ENCODE measurements at regions of chr2 and their contacts with region 1.

Region 1: DNA sequence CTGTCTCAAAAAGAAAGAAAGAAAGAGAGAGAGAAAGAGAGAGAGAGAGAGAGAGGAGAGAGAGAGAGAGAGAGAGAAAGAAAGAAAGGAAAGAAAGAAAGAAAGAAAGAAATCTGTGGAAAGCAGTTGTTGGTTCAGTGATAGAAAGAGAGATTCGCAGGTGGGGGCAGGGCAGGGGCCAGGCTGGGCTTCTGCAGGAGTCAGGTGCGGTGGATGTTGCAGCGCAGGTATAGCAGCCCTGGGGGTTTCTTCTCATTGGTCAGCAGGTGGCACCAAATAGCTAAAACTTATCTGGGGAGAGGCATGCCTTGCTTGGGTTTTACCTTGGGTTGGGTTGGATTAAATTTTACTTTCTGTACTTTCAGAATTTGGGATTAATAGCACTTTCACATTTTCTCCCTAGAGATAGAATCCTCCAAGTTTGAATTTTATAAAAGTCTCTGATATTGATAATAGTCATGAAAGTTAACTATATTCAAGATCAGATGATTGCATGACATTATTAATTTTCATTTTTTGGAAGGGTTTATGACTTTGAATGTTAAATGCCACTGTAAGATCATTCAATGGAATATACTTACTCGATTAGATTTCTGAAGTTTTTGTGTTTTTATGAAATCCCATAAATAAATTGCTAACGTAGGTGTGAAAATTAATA is 66.6 kb downstream of the SPTBN1 start:
- DNase-seq: peak; percentile 83
- H3K4me3 ChIP-seq: no peak overlapping the region
- H3K27ac ChIP-seq: no peak overlapping the region
- H3K4me1 ChIP-seq: no peaks in the 10 kb centered on the region
- H3K27me3 ChIP-seq: no peaks in the 10 kb centered on the region
- CTCF ChIP-seq: peak; percentile 62

Region 2: GRCh38 chr2:54387059-54387991 is 135.4 kb before region 1 on chr2:
- intact Hi-C with region 1: no loop called
- DNase-seq: no peak
- H3K4me3 ChIP-seq: no peak overlapping the region
- H3K27ac ChIP-seq: no peak overlapping the region
- H3K4me1 ChIP-seq: no peaks in the 10 kb centered on the region
- H3K27me3 ChIP-seq: no peaks in the 10 kb centered on the region
- CTCF ChIP-seq: no peak

Region 3: GRCh38 chr2:54629914-54630857 is 107.4 kb after region 1 on chr2:
- intact Hi-C with region 1: loop called (anchors 10 kb)
- DNase-seq: peak; percentile 34
- H3K4me3 ChIP-seq: no peak overlapping the region
- H3K27ac ChIP-seq: no peak overlapping the region
- H3K4me1 ChIP-seq: no peaks in the 10 kb centered on the region
- H3K27me3 ChIP-seq: no peaks in the 10 kb centered on the region
- CTCF ChIP-seq: no peak

Region 4: GRCh38 chr2:54657664-54658083 is 134.9 kb after region 1 on chr2:
- intact Hi-C with region 1: loop called (anchors 10 kb)
- DNase-seq: peak; percentile 71
- H3K4me3 ChIP-seq: no peak overlapping the region
- H3K27ac ChIP-seq: no peak overlapping the region
- H3K4me1 ChIP-seq: no peaks in the 10 kb centered on the region
- H3K27me3 ChIP-seq: no peaks in the 10 kb centered on the region
- CTCF ChIP-seq: peak; percentile 34